Posterior cingulate gyrus (tissue), 11 donors: ENCODE measurements at regions of chr7 and their contacts with region 1.

Region 1: GRCh38 chr7:148084138-148084537 is 506.4 kb upstream of the C7orf33 start:
- DNase-seq: peak in 7 of 10 donors; percentile 14 to 89 (median 73)

Region 2: DNA sequence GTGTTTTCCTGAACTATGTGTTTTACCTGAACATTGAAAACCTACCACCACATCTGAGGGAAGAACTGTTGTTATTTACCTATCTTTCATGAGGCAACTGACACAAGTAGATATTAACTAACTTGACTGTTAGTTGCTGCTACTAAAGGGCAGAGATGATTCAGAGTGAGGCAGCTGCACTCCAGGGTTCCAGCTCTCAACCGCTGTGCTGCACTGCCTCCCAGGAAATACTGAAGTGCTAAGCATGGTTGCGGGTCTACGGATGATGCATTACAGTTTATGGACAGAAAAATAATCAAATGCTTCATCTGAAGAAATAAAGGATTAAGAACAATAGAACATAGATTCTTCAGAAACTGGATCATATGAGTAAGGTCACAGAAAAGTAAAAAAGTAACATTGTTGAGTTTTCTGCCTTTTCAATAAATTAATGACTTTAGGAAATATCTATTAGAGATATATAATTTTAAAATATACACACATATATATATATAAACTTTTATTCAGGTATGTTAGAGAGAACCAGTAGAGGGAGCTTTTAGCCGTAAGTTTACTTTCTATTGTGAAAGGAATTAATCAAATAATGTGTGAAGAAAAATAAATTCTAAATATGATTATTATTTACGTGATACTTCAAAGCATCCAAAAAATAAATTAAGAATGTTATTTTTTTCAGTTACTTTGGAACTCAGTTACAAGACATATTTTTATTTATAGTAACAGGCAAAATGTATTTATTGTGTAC is 1347.5 kb before region 1 on chr7:
- intact Hi-C with region 1: loop called (anchors 5 kb)
- DNase-seq: no peak

Region 3: DNA sequence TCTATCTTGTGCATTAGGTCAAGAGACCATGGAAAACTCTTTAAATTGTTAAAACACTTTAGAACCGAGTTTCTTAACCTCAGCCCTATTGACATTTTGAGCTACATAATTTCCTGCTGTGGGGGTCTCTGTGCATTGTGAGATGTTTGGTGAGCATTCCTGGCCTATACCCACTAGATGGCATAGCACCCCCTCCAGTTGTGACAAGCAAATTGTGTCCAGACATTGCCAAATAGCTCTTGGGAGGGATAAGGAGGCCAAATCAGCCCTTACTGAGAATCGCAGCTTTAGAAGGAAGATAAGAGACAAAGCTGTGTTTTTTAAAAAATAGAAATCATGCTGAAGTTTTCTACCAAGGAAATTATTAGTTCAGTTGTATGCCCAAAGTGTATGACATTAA is 652.1 kb before region 1 on chr7:
- intact Hi-C with region 1: loop called (anchors 1 kb)
- DNase-seq: peak in 6 of 10 donors; percentile 9 to 83 (median 27)

Region 4: DNA sequence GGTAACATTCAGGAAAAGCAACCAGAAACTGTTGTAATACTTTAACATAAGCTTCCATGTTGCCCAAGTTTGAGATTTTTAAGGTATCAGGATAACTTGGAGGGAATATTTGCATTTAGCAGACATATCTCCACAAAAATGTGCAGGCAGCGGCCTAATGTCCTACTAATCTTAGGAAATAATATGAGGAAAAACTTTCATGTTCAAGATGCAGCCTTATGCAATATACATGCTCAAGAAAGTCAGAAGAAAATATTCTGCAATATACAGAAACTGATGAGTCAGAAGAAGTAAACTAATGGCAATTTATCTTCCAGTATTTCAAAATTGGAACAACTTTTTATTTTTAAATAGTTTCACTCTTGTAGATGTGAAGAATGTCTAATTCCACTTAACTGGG is 43.2 kb after region 1 on chr7:
- intact Hi-C with region 1: no loop called
- DNase-seq: no peak